BJ (cell line): ENCODE measurements at regions of chr19 and their contacts with region 1.

Region 1: DNA sequence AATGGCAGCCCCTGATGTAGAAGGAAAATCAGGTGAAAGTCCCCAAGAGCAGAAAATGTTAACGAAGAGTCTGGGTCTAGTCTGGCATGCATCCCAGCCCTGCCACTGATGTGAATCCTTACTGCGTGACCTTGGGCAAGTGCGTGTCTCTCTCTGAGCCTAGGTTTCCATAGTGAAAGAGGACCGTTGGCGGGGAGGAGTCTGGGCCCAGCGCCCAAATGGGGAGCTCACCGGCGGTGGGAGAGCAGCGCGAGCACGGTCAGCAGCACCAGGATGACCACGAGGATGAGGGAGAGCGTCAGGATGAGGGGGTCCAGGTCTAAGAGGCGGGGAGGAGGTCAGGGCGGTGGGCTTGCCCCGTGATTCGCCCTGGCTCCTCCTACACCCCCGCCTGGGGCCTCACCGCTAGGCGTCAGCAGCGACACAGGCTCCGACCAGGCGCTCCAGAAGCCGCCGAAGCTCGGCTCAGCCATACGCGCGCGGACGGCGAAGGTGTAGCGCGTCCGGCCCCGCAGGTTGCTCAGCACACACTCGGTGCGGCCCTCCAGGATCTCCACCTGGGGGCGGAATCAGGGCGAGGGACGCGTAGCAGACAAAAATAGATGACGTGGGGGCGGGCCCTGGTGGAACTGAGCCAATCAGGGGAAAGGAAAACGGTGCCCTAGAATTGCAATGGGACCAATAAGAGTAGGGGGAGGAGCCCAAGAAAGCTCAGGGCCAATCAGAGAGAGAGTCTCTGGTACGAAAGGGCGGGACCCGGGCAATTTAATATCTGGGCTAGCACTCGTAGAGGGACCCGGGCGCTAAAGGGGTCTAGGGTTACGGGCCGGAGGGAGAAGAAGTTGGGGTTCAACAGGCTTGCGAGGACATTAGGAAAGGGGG is 3.2 kb downstream of the EPOR start:
- DNase-seq: peak; percentile 66
- H3K4me3 ChIP-seq: peak overlapping the region; percentile 75
- H3K27me3 ChIP-seq: no peaks in the 10 kb centered on the region
- CTCF ChIP-seq: peak; percentile 83

Region 2: GRCh38 chr19:11293433-11294389 is 87.2 kb before region 1 on chr19:
- CTCF ChIA-PET with region 1: interaction called, 19 read pairs
- POLR2A ChIA-PET with region 1: no interaction called
- DNase-seq: peak; percentile 54
- H3K4me3 ChIP-seq: peak overlapping the region; percentile 28
- H3K27me3 ChIP-seq: 0 out of 2 replicates have a peak, but pooled peaks cover 1% of the 10 kb centered on the region
- CTCF ChIP-seq: peak; percentile 100

Region 3: DNA sequence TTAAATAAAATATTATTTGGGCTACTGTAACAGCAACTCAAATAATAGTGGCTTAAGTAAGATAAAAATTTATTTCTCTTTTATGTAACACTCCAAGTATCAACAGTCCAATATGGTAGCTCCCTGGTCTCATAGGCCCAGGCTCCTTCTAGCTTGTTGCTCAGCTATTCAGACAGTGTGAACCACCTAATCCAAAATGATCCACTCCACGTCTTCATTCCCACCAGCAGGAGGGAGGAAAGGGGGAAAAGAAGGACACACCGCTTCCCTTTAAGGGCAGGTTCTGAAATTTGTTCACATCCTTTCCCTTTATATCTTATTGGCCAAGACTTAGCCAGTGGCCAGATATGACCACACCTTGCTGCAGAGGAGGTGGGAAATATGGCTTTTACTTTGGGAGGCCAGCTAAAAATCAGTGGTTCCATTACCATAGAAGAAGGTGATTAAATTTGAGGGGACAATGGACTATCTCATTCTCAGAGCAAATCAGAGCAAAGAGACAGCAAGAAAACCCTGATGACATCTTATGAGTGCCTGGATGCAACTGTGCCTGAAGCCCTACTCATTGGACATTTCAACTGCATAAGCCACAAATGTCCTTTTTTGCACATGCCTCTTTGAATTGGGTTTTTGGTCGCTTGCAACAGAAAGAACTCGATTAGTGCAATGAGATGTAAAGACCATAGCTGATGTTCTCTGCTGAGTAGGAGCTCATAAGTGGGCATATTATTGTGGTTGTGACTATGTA is 10.2 kb after region 1 on chr19:
- CTCF ChIA-PET with region 1: interaction called, 20 read pairs
- POLR2A ChIA-PET with region 1: no interaction called
- DNase-seq: no peak
- H3K4me3 ChIP-seq: no peak overlapping the region
- H3K27me3 ChIP-seq: no peaks in the 10 kb centered on the region
- CTCF ChIP-seq: no peak

Region 4: DNA sequence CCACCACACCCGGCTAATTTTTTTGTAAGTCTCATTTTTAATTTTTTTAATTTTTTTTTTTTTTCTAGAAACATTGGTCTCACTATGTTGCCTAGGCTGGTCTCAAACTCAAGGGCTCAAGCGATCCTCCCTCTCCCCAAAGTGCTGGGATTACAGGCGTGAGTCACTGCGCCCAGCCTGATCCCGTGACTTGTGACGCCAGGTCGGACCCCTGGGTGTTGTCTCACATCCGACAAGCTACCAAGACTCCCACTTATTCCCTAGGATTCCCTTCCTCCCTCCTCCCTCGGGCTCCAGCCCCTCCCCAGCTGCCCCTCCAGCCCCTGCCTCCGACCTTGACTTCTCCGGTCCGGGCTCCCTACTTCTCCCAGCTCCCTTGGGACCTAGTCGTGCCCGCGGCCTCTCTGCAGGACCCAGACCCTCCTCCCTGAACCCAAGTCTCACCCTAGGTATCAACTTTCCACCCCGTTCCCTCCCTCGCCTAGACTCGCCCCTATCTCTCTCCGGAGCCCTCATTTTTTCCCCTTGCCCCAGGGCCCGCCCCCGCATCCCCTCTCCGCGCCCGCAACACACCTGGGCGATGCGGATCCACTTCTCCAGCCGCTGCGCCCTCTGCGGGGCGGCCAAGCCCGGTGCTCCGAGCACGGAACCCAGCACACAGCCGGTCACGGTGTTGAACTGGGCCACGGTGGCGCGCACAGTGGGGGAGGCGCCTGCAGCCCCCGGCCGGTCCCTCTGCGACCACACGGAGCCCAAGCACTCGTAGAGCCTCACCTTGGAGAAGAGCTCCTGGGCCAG is 25.2 kb after region 1 on chr19:
- CTCF ChIA-PET with region 1: interaction called, 15 read pairs
- POLR2A ChIA-PET with region 1: interaction called, 3 read pairs
- DNase-seq: no peak
- H3K4me3 ChIP-seq: no peak overlapping the region
- H3K27me3 ChIP-seq: no peaks in the 10 kb centered on the region
- CTCF ChIP-seq: peak; percentile 19

Region 5: GRCh38 chr19:11422163-11423021 is 41.5 kb after region 1 on chr19:
- CTCF ChIA-PET with region 1: interaction called, 27 read pairs
- POLR2A ChIA-PET with region 1: no interaction called
- DNase-seq: peak; percentile 17
- H3K4me3 ChIP-seq: peak overlapping the region; percentile 9; the same call in 1 of the 2 replicates
- H3K27me3 ChIP-seq: peaks cover 1% of the 10 kb centered on the region; the same call in 1 of the 2 replicates
- CTCF ChIP-seq: no peak

Region 6: DNA sequence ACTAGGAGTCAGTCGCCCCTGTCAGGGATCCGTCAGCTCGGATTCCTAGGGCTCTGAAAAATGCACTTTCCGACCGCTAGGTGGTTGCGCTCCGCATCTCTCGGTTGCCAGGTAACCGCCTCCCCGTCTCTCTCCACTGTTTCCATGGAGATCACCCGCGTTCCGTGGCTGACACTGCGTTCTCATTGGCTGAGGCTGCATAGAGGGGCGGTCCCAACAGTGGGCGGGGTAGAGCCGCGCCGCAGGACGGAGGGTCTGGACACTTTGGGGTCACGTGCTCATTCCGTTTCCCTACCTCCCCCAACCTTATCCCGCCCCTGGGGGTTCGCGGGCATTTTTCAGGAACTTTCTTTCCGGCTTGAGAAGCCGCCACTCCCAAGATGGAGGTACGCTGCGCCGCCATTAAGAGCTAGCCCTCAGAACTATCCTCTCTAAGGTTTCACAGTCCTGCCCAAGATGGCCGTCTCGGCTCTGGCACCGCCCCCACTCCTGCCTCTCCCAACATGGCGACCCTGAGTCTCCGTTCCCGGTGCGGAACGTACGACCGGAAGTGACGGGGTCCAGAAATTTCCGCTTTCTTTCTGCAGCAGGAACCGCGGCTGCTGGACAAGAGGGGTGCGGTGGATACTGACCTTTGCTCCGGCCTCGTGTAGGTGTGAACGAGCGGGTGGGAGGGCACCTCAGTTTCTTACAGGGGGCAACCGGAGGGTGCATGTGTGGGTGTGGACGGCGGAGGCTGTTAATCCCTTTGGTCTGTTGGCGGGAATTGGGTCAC is 54.4 kb after region 1 on chr19 and contains the starts of genes ODAD3 and PRKCSH:
- CTCF ChIA-PET with region 1: interaction called, 12 read pairs
- POLR2A ChIA-PET with region 1: no interaction called
- DNase-seq: peak; percentile 100
- H3K4me3 ChIP-seq: peak within 1 kb of the TSS; percentile 76
- H3K27me3 ChIP-seq: no peaks in the 10 kb centered on the region
- CTCF ChIP-seq: peak; percentile 88
- polyA plus RNA-seq, gene ODAD3: 0.16 and 0.38 TPM in 2 replicates
- polyA plus RNA-seq, gene PRKCSH: 137 and 348 TPM in 2 replicates

Region 7: DNA sequence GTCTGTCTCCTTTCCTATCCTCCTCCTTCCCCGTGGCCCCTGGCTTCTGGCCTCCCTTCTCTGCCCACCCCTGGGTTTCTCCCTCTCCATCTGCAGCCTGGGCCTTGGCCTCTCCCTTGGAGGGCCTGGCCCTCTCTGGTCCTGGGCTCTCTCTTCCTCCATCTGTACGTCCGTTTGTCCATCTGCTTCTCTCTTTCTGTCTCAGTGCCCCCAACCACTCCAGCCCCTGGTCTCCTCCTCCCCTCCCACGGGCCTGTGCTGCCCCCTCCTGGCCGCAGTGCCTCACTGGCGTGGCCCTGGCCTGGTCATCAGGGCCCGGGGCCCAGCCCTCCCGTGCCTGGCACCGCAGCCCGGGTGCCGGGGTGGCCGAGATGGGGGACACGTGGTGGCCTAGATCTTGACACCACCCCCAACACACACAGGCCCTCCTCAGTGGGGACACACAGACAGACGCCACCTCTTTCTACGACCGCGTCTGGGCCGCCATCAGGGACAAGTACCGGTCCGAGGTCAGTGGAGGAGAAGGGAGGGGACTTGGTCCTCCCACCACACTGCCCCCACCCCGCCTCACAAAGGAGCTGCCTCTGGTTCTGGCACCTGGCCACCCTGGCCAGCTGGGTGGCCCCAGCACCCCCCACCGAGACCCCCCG is 65.9 kb after region 1 on chr19:
- CTCF ChIA-PET with region 1: interaction called, 16 read pairs
- POLR2A ChIA-PET with region 1: no interaction called
- DNase-seq: no peak
- H3K4me3 ChIP-seq: no peak overlapping the region
- H3K27me3 ChIP-seq: no peaks in the 10 kb centered on the region
- CTCF ChIP-seq: peak; percentile 80